Calu3 (cell line): ENCODE measurements at regions of chr9 and their contacts with region 1.

Region 1: DNA sequence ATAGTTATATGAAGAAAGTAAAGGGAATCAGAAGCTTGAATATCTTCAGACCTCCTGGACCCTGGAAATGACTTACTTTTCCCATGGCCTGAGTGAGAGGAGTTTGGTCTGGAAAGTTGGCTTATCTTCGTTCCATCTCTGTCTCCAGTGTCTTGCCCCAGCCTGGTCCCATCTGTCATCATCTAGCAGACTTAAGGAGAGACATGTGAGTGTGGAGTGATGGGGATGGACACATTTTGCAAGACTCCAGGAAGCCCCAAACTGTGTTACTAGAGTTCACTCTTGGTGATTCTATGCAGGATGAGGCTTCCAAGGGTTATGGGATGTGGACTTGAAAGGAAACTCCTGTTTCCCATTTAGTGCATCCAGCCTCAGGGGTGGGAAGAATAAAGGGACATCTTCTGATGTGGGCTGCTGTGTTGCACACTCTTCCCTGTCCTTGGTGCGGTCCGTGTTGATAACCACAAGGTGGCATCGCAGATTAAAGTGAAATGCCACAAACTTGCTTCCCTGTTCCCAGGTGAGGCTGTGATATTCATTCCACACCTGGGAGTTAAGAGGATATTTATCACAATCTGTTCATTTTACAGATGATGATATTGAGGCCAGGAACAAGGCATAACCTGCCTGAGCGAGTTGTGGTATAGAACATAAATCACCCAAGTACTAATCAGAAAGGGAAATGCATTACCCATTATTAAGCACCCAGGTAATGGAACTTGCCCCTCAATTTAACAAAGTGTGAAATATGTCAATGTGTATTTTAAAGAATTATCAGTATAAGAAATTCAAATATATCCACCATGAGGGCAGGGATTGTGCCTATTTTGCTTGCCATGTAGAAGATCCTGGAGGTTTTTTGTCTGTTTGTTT is 269.9 kb upstream of the PAPPA start:
- DNase-seq: peak; percentile 34
- H3K4me3 Mint-ChIP-seq: no peak overlapping the region
- H3K27ac Mint-ChIP-seq: no peak overlapping the region
- H3K4me1 Mint-ChIP-seq: no peaks in the 10 kb centered on the region
- H3K27me3 Mint-ChIP-seq: no peaks in the 10 kb centered on the region
- CTCF ChIP-seq: no peak

Region 2: GRCh38 chr9:116112236-116112635 is 228.5 kb after region 1 on chr9:
- CTCF ChIA-PET with region 1: no interaction called
- intact Hi-C with region 1: loop called (anchors 5 kb)
- DNase-seq: no peak
- H3K4me3 Mint-ChIP-seq: no peak overlapping the region
- H3K27ac Mint-ChIP-seq: no peak overlapping the region
- H3K4me1 Mint-ChIP-seq: no peaks in the 10 kb centered on the region
- H3K27me3 Mint-ChIP-seq: no peaks in the 10 kb centered on the region
- CTCF ChIP-seq: no peak

Region 3: GRCh38 chr9:116149844-116150243 is 266.2 kb after region 1 on chr9:
- CTCF ChIA-PET with region 1: no interaction called
- intact Hi-C with region 1: loop called (anchors 10 kb)
- DNase-seq: peak; percentile 27
- H3K4me3 Mint-ChIP-seq: no peak overlapping the region
- H3K27ac Mint-ChIP-seq: no peak overlapping the region
- H3K4me1 Mint-ChIP-seq: no peaks in the 10 kb centered on the region
- H3K27me3 Mint-ChIP-seq: peaks cover 32% of the 10 kb centered on the region
- CTCF ChIP-seq: no peak

Region 4: GRCh38 chr9:116572095-116572748 is 688.5 kb after region 1 on chr9:
- CTCF ChIA-PET with region 1: no interaction called
- intact Hi-C with region 1: loop called (anchors 5 kb)
- DNase-seq: peak; percentile 73
- H3K4me3 Mint-ChIP-seq: no peak overlapping the region
- H3K27ac Mint-ChIP-seq: no peak overlapping the region
- H3K4me1 Mint-ChIP-seq: peaks cover 6% of the 10 kb centered on the region
- H3K27me3 Mint-ChIP-seq: no peaks in the 10 kb centered on the region
- CTCF ChIP-seq: peak; percentile 58

Region 5: GRCh38 chr9:116661037-116661954 is 777.6 kb after region 1 on chr9:
- CTCF ChIA-PET with region 1: no interaction called
- intact Hi-C with region 1: loop called (anchors 5 kb)
- DNase-seq: peak; percentile 18
- H3K4me3 Mint-ChIP-seq: no peak overlapping the region
- H3K27ac Mint-ChIP-seq: no peak overlapping the region
- H3K4me1 Mint-ChIP-seq: no peaks in the 10 kb centered on the region
- H3K27me3 Mint-ChIP-seq: no peaks in the 10 kb centered on the region
- CTCF ChIP-seq: no peak